ENCODE measurements at regions of chr1 and their contacts with region 1.

Region 1: GRCh38 chr1:92310185-92310597 is 11.3 kb downstream of the RPAP2 start:
- DNase-seq: no peak
- ATAC-seq: peak; percentile 34
- H3K4me3 Mint-ChIP-seq: no peak overlapping the region
- H3K27ac Mint-ChIP-seq: no peak overlapping the region
- H3K4me1 Mint-ChIP-seq: peaks cover 33% of the 10 kb centered on the region
- H3K27me3 Mint-ChIP-seq: no peaks in the 10 kb centered on the region

Region 2: GRCh38 chr1:92577261-92577895 is 267.2 kb after region 1 on chr1:
- CTCF ChIA-PET with region 1: interaction called, 11 read pairs
- POLR2A ChIA-PET with region 1: interaction called, 4 read pairs
- intact Hi-C with region 1: no loop called
- DNase-seq: peak; percentile 42
- ATAC-seq: peak; percentile 62
- H3K4me3 Mint-ChIP-seq: peak overlapping the region; percentile 88
- H3K27ac Mint-ChIP-seq: peak overlapping the region; percentile 89
- H3K4me1 Mint-ChIP-seq: peaks cover 61% of the 10 kb centered on the region
- H3K27me3 Mint-ChIP-seq: no peaks in the 10 kb centered on the region

Region 3: GRCh38 chr1:92599184-92599583 is 289.0 kb after region 1 on chr1:
- CTCF ChIA-PET with region 1: interaction called, 7 read pairs
- POLR2A ChIA-PET with region 1: no interaction called
- intact Hi-C with region 1: loop called (anchors 1 kb)
- DNase-seq: no peak
- ATAC-seq: peak; percentile 66
- H3K4me3 Mint-ChIP-seq: no peak overlapping the region
- H3K27ac Mint-ChIP-seq: no peak overlapping the region
- H3K4me1 Mint-ChIP-seq: peaks cover 36% of the 10 kb centered on the region
- H3K27me3 Mint-ChIP-seq: no peaks in the 10 kb centered on the region

Region 4: GRCh38 chr1:92623187-92623778 is 313.1 kb after region 1 on chr1:
- CTCF ChIA-PET with region 1: interaction called, 15 read pairs
- POLR2A ChIA-PET with region 1: no interaction called
- intact Hi-C with region 1: loop called (anchors 1 kb)
- DNase-seq: no peak
- ATAC-seq: peak; percentile 57
- H3K4me3 Mint-ChIP-seq: no peak overlapping the region
- H3K27ac Mint-ChIP-seq: no peak overlapping the region
- H3K4me1 Mint-ChIP-seq: peaks cover 14% of the 10 kb centered on the region
- H3K27me3 Mint-ChIP-seq: no peaks in the 10 kb centered on the region

Region 5: DNA sequence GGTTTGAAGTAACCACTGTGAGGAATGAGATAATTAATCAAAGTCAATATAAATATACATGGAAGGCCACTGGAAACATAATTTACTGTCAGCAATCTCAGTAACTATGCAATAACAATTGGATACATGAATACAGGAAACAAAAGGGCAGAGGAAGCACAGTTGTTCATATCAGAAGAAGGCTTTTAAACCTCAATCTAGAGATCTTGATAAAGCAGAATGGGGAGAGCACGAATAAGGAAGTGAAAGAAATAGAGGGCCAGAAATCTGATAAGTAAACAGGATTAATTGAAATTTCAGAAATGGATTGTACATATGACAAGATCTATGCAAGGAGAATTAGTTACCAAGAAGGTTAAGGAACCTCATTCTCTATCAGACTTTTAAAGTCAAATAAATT is 381.7 kb after region 1 on chr1:
- CTCF ChIA-PET with region 1: no interaction called
- POLR2A ChIA-PET with region 1: no interaction called
- intact Hi-C with region 1: no loop called
- DNase-seq: no peak
- ATAC-seq: no peak
- H3K4me3 Mint-ChIP-seq: no peak overlapping the region
- H3K27ac Mint-ChIP-seq: no peak overlapping the region
- H3K4me1 Mint-ChIP-seq: peaks cover 9% of the 10 kb centered on the region
- H3K27me3 Mint-ChIP-seq: no peaks in the 10 kb centered on the region